B cell (primary cell): ENCODE measurements at regions of chr2 and their contacts with region 1.

Region 1: DNA sequence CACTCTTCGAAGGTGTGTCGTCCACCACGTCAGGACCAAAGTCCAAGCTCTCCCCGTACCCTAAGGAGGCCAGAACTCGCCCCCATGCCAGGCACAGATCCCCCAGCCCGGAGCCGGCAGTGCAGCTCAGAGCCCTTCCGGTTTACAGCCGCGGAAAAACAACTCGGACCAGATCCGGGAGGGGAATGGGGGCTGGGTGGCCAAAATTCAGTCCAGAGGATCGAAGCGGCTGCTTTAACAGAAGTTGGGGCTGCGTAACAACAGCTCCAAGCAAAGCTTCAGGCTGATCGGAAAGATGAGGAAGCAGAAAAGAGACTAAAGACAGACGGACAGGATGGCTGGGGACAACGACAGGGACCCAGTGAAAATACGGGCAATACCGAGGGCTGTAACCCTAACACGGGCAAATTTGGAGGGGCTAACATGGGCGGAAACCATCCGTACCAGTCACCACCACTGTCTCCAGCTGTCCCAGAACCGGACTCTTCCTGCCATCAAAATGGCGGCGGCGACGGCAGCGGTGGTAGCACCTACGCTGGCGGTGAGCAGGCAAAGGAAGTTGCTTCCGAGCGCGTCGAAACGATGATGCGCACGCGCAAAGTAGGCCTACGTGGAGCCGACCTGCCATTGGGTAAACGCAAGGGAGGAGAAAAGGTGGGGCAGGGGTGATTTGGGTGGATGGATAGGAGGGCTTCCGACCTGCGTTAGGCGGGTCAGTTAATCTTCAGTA is at the start of gene MMADHC:
- DNase-seq: peak; percentile 95
- ATAC-seq: peak; percentile 95
- H3K4me3 ChIP-seq: peak within 1 kb of the TSS; percentile 79 to 100 (median 97)
- H3K4me3 Mint-ChIP-seq: peak within 1 kb of the TSS; percentile 91
- H3K27ac ChIP-seq: peak within 1 kb of the TSS; percentile 91 to 97
- H3K27ac Mint-ChIP-seq: peak within 1 kb of the TSS; percentile 94
- H3K4me1 ChIP-seq: peaks cover 16 to 20% of the 10 kb centered on the region in 2 donors
- H3K4me1 Mint-ChIP-seq: peaks cover 37% of the 10 kb centered on the region
- H3K27me3 ChIP-seq: peaks cover 0 to 4% (median 0%) of the 10 kb centered on the region in 4 experiments
- H3K27me3 Mint-ChIP-seq: peaks cover 10% of the 10 kb centered on the region
- CTCF ChIP-seq: no peak
- total RNA-seq, gene MMADHC: 55.9 and 60.3 TPM in 2 replicates

Region 2: DNA sequence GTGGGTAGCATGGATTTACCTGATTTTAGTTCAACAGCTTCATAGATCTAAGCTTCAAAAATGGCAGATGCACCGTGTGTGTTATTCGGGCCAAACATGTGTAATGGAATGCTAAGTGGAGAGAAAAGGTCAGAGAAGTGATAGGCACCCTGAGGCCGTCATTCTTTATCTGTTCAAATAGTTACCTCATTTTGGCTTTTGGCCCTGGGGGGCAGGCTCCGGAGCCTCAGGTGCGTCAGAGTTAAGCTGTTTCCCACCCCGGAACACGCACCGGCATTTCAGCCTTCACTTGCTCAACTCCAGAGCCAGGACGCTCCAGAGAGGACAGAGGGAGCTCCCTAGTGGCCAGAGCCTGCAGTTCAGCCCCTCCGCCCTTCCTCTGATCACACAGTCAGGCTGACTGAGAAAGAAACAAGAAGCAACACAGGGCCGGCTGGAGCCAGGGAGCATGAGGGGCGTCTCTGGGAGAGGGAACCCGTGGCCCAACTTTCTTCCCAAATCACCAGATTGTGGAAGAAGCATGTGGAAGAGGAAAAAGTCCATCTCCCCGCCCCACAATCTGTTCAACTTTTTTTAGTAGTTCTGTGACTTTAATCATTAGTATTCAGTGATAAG is 1078.0 kb before region 1 on chr2:
- CTCF ChIA-PET with region 1: no interaction called
- POLR2A ChIA-PET with region 1: no interaction called
- intact Hi-C with region 1: loop called (anchors 10 kb)
- DNase-seq: peak; percentile 84
- ATAC-seq: peak; percentile 100
- H3K4me3 ChIP-seq: peak overlapping the region in 4 of 5 experiments; percentile 28 to 58 (median 52)
- H3K4me3 Mint-ChIP-seq: peak overlapping the region; percentile 65
- H3K27ac ChIP-seq: no peak overlapping the region
- H3K27ac Mint-ChIP-seq: peak overlapping the region; percentile 21
- H3K4me1 ChIP-seq: peaks cover 4 to 9% of the 10 kb centered on the region in 2 donors
- H3K4me1 Mint-ChIP-seq: peaks cover 9% of the 10 kb centered on the region
- H3K27me3 ChIP-seq: no peaks in the 10 kb centered on the region
- H3K27me3 Mint-ChIP-seq: no peaks in the 10 kb centered on the region
- CTCF ChIP-seq: peak; percentile 86

Region 3: DNA sequence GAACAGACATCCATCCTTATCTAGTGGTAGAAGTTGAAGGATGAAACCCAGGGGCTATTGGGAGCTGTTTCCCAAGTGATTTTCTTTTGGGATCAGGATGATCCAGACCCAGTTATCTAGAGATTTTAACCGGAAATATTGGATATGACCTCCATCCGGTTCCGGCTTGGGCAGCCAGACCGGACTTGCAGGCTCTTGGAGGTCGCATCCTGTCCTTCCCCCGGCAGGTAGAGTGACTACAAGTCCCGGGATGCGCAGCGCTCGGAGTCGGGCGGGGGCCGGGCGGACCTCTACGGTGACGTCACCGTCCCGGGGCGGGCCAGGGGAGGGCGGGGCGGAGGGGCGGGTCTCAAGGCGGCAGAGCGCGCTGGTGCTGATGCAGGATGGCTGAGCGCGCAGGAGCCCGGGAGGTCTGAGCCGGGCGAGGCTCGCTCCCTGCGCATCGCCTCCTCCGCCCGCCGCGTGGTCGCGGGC is 712.5 kb before region 1 on chr2 and contains the start of gene KIF5C:
- CTCF ChIA-PET with region 1: no interaction called
- POLR2A ChIA-PET with region 1: no interaction called
- intact Hi-C with region 1: loop called (anchors 1 kb)
- DNase-seq: peak; percentile 88
- ATAC-seq: peak; percentile 92
- H3K4me3 ChIP-seq: peak within 1 kb of the TSS in 4 of 5 experiments; percentile 37 to 67 (median 58)
- H3K4me3 Mint-ChIP-seq: peak within 1 kb of the TSS; percentile 86
- H3K27ac ChIP-seq: no peak within 1 kb of the TSS
- H3K27ac Mint-ChIP-seq: peak within 1 kb of the TSS; percentile 32
- H3K4me1 ChIP-seq: peaks cover 18 to 24% of the 10 kb centered on the region in 2 donors
- H3K4me1 Mint-ChIP-seq: peaks cover 16% of the 10 kb centered on the region
- H3K27me3 ChIP-seq: peaks cover 0 to 38% (median 14%) of the 10 kb centered on the region in 4 experiments
- H3K27me3 Mint-ChIP-seq: peaks cover 43% of the 10 kb centered on the region
- CTCF ChIP-seq: no peak
- total RNA-seq, gene KIF5C: 6.0 and 6.1 TPM in 2 replicates

Region 4: GRCh38 chr2:151289369-151290088 is 1702.1 kb after region 1 on chr2 and contains the start of gene NMI:
- CTCF ChIA-PET with region 1: no interaction called
- POLR2A ChIA-PET with region 1: interaction called, 4 read pairs
- intact Hi-C with region 1: loop called (anchors 1 kb)
- DNase-seq: peak; percentile 85
- ATAC-seq: peak; percentile 76
- H3K4me3 ChIP-seq: peak within 1 kb of the TSS; percentile 75 to 97 (median 92)
- H3K4me3 Mint-ChIP-seq: peak within 1 kb of the TSS; percentile 94
- H3K27ac ChIP-seq: peak within 1 kb of the TSS; percentile 95 to 97
- H3K27ac Mint-ChIP-seq: peak within 1 kb of the TSS; percentile 97
- H3K4me1 ChIP-seq: peaks cover 27 to 31% of the 10 kb centered on the region in 2 donors
- H3K4me1 Mint-ChIP-seq: peaks cover 39% of the 10 kb centered on the region
- H3K27me3 ChIP-seq: no peaks in the 10 kb centered on the region
- H3K27me3 Mint-ChIP-seq: no peaks in the 10 kb centered on the region
- CTCF ChIP-seq: no peak
- total RNA-seq, gene NMI: 28.5 and 34.0 TPM in 2 replicates